ENCODE measurements at regions of chr13 and their contacts with region 1.

Region 1: GRCh38 chr13:41456768-41457588 is at the start of gene RGCC:
- DNase-seq: peak; percentile 80
- H3K4me3 ChIP-seq: peak within 1 kb of the TSS; percentile 85
- H3K27ac ChIP-seq: peak within 1 kb of the TSS; percentile 95
- H3K4me1 ChIP-seq: peaks cover 26% of the 10 kb centered on the region
- CTCF ChIP-seq: no peak
- total RNA-seq, gene RGCC: 219 and 274 TPM in 2 replicates

Region 2: DNA sequence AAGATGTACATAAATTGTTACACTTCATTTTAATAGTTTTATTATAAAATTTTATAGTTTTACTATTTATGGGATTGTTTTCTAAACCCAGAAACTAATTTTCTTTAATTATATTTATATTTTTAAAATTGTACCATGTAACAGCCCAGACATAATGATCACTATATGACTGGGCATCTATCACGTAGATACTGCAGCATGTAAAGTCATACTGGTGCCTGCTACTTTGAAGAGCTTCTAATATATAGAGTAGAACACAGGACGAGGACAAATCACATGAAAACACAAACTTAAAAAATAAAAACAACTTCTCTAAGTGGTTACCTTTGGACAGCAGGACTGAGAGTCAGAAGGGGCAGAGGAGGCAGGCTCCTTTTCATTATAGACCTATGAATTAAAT is 443.1 kb before region 1 on chr13:
- CTCF ChIA-PET with region 1: no interaction called
- POLR2A ChIA-PET with region 1: no interaction called
- intact Hi-C with region 1: loop called (anchors 2 kb)
- DNase-seq: no peak
- H3K4me3 ChIP-seq: peak overlapping the region; percentile 84
- H3K27ac ChIP-seq: peak overlapping the region; percentile 94
- H3K4me1 ChIP-seq: peaks cover 53% of the 10 kb centered on the region
- CTCF ChIP-seq: no peak

Region 3: DNA sequence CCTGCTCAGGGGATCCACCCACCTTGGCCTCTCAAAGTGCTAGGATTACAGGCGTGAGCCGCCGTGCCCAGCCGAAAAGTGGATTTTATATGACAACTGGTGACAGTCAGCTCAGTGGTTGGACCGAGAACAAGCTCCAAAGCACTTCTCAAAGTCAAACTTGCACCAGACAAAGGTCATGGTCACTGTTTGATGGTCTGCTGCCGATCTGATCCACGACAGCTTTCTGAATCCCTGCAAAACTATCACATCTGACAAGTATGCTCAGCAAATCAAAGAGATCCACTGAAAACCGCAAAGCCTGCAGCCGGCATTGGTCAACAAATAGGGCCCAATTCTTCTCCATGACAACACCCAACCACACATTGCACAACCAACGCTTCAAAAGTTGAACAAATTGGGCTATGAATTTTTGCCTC is 167.5 kb before region 1 on chr13:
- CTCF ChIA-PET with region 1: no interaction called
- POLR2A ChIA-PET with region 1: no interaction called
- intact Hi-C with region 1: no loop called
- DNase-seq: no peak
- H3K4me3 ChIP-seq: no peak overlapping the region
- H3K27ac ChIP-seq: no peak overlapping the region
- H3K4me1 ChIP-seq: no peaks in the 10 kb centered on the region
- CTCF ChIP-seq: no peak

Region 4: DNA sequence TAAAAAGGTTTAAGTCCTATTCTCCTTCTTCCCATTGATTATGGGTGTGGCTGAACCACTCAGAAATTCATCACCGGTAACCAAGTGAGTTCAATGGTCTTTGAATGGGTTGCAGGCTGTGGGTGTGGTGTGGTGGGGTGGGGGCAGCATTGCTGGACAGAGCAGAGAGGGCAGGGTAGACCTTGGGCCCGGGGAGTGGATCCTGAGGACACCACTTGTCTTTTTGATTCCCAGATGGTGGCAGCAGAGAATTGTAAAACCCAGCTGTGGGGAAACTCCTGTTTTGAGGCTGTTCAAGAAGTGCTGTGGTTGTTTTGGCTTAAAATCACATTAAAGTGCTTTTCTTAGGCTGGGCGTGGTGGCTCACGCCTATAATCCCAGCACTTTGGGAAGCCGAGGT is 45.5 kb before region 1 on chr13:
- CTCF ChIA-PET with region 1: no interaction called
- POLR2A ChIA-PET with region 1: no interaction called
- intact Hi-C with region 1: loop called (anchors 2 kb)
- DNase-seq: peak; percentile 65
- H3K4me3 ChIP-seq: no peak overlapping the region
- H3K27ac ChIP-seq: no peak overlapping the region
- H3K4me1 ChIP-seq: peaks cover 9% of the 10 kb centered on the region
- CTCF ChIP-seq: peak; percentile 76

Region 5: DNA sequence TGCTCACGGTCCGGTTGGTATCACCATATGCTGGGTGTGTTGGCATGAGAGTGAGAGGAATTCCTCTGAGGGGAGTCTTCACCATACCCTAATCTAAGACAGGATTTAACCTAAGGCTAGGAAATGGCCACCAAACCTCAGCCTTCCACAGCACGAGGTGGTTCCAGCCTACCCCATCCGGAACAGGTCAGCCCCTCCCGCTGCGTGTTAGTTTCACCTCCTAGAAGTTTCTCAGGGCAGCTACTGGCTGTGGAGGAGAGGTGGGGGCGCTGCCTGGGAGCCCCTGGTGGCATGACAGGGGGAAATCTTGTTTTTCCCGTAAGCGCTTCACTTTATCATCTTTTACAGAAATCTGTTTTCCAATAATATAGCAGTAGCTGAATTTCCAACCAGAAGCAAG is 55.5 kb after region 1 on chr13:
- CTCF ChIA-PET with region 1: interaction called, 3 read pairs
- POLR2A ChIA-PET with region 1: interaction called, 16 read pairs
- intact Hi-C with region 1: no loop called
- DNase-seq: peak; percentile 84
- H3K4me3 ChIP-seq: no peak overlapping the region
- H3K27ac ChIP-seq: peak overlapping the region; percentile 59
- H3K4me1 ChIP-seq: peaks cover 34% of the 10 kb centered on the region
- CTCF ChIP-seq: peak; percentile 58

Region 6: GRCh38 chr13:41577436-41577835 is 120.5 kb after region 1 on chr13:
- CTCF ChIA-PET with region 1: no interaction called
- POLR2A ChIA-PET with region 1: no interaction called
- intact Hi-C with region 1: no loop called
- DNase-seq: no peak
- H3K4me3 ChIP-seq: no peak overlapping the region
- H3K27ac ChIP-seq: no peak overlapping the region
- H3K4me1 ChIP-seq: peaks cover 7% of the 10 kb centered on the region
- CTCF ChIP-seq: no peak

Region 7: GRCh38 chr13:41590643-41591042 is 133.7 kb after region 1 on chr13:
- CTCF ChIA-PET with region 1: interaction called, 4 read pairs
- POLR2A ChIA-PET with region 1: interaction called, 12 read pairs
- intact Hi-C with region 1: loop called (anchors 1 kb)
- DNase-seq: peak; percentile 93
- H3K4me3 ChIP-seq: peak overlapping the region; percentile 39
- H3K27ac ChIP-seq: peak overlapping the region; percentile 85
- H3K4me1 ChIP-seq: peaks cover 41% of the 10 kb centered on the region
- CTCF ChIP-seq: no peak

Measured in OCI-LY7 (cell line).